Aorta (tissue), 5 donors: ENCODE measurements at regions of chr4 and their contacts with region 1.

Region 1: DNA sequence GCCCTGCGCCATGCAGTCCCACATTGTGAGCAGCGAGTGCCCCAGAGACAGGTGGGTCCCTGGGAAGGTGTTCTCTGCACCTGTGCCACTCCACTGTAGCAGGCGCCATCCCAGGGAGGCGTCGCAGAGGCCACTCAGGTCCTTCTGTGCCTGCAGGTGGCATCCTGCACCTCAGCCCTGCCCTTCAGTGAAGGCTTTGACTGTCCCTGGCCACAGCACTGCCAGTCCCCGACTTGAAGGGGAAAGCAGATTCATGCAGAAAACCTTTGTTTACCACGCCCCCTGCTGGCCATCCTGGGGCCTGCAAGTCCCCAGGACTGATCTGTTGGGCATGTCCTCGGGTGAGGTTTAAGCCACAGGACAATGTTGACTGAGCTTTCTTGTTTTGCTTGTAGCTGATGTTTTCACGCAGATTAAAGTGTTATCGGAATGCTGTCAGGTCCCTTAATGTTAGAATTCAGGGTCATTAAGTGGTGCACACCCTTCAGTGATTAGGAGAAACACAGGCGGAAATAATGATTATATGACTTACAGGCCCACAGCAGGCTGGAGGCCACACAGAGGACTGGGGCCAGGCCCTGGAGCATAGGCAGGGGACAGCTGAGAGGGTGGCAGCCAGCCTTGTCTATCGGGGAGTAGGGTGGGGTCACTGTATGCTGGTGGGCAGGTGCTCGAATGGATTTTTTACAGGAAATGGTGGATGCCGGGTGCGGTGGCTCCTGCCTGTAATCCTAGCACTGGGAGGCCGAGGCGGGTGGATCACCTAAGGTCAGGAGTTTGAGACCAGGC is 5.0 kb downstream of the TACC3 start:
- DNase-seq: peak; percentile 92 to 95
- ATAC-seq: peak; percentile 72
- H3K4me3 ChIP-seq: no peak overlapping the region
- H3K27ac ChIP-seq: no peak overlapping the region
- H3K4me1 ChIP-seq: no peaks in the 10 kb centered on the region
- H3K27me3 ChIP-seq: no peaks in the 10 kb centered on the region

Region 2: GRCh38 chr4:1693129-1693896 is 33.0 kb before region 1 on chr4:
- intact Hi-C with region 1: loop called (anchors 1 to 2 kb)
- DNase-seq: peak; percentile 77 to 89
- ATAC-seq: no peak
- H3K4me3 ChIP-seq: no peak overlapping the region
- H3K27ac ChIP-seq: no peak overlapping the region
- H3K4me1 ChIP-seq: no peaks in the 10 kb centered on the region
- H3K27me3 ChIP-seq: no peaks in the 10 kb centered on the region

Region 3: DNA sequence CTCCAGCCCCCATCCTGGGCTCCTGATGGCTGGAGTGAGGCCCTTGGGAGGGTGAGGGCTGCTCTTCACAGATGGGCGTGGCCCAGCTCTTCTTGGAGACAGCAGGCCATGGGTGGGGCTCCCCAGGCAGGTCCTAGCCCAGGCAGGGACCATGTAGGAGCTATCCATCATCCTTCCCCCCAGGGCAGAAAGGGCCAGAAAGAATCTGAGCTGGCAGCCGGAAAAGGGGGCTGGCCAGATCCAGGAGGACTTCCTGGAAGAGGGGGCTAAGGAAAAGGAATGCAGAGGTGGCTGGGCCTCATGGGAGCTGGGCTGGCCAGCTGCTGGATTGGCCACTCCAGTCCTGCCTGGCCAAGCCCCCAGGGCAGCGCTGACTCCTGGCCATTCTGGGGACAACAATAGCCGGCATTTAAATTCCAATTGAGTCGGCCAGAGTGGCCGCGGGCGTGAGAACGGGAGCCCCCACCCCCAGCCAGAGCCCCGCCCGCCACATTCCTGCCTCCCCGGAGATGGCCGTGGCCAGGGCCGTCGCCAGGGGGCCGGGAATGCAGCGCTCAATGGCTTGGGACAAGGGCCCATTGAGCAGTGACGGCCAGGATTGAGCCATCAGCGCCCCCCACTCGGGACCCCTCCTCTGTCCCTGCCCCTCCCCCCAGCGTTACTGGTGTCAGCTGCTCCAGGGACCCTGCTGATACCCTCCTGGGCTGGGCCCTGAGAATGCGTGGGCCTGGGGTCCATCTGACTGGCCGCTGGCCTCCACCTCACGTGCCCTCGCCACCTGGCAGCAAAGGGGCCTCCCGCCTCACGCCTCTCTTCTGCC is 51.7 kb after region 1 on chr4:
- intact Hi-C with region 1: no loop called
- DNase-seq: no peak
- ATAC-seq: no peak
- H3K4me3 ChIP-seq: no peak overlapping the region
- H3K27ac ChIP-seq: no peak overlapping the region
- H3K4me1 ChIP-seq: no peaks in the 10 kb centered on the region
- H3K27me3 ChIP-seq: no peaks in the 10 kb centered on the region